ENCODE measurements at regions of chr10 and their contacts with region 1.

Region 1: DNA sequence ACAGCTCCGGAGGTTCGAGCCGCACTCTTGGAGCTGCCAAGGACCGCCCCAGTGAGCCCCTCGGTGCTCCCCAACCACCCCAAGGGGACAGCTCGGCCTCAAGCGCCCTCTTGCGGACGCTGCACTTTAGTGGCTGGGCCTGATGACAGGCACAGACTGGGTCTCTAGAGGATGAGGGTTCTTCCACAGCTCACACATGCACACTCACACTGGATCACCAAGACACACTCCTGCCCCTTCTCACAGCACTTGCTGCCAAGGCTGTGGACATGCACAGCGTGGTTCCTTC is 2.1 kb downstream of the RET start:
- DNase-seq: no peak
- H3K4me3 ChIP-seq: no peak overlapping the region
- CTCF ChIP-seq: no peak
- POLR2A ChIP-seq: no peak

Region 2: GRCh38 chr10:42872865-42873643 is 205.9 kb before region 1 on chr10:
- intact Hi-C with region 1: loop called (anchors 5 kb)
- DNase-seq: no peak
- H3K4me3 ChIP-seq: no peak overlapping the region
- CTCF ChIP-seq: no peak
- POLR2A ChIP-seq: no peak

Region 3: DNA sequence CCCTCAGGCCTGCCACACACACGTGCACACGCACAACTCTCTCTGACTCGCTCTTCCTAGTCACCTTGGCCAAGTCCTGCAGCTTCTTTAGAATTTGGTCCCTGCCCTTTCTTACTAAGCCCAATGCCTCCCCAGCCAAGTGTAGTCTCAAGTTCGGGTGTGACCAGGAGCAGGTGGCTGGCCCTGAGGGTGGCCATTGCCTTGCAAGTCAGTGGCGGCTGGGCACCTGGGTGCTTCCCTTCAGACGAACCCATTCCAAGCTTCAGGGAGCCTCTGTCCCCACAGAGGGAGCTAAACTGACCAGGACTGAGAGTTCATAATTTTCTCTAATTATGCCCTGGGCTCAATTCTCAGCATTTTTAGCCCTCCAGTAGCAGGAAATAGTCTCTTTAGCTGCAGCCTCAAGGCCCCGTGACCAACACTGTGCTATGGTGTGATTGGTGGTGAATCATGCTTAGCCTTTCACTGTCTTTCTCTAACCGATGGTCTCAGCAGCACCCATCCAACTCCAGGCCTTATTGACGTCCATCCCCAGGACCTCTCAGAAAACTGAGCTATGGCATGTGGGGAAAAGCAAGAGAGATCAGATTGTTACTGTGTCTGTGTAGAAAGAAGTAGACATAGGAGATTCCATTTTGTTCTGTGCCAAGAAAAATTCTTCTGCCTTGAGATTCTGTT is 257.8 kb after region 1 on chr10:
- intact Hi-C with region 1: no loop called
- DNase-seq: no peak
- H3K4me3 ChIP-seq: no peak overlapping the region
- CTCF ChIP-seq: no peak
- POLR2A ChIP-seq: no peak

Measured in lower leg skin (tissue), 4 donors.